ENCODE measurements at regions of chr10 and their contacts with region 1.

Region 1: DNA sequence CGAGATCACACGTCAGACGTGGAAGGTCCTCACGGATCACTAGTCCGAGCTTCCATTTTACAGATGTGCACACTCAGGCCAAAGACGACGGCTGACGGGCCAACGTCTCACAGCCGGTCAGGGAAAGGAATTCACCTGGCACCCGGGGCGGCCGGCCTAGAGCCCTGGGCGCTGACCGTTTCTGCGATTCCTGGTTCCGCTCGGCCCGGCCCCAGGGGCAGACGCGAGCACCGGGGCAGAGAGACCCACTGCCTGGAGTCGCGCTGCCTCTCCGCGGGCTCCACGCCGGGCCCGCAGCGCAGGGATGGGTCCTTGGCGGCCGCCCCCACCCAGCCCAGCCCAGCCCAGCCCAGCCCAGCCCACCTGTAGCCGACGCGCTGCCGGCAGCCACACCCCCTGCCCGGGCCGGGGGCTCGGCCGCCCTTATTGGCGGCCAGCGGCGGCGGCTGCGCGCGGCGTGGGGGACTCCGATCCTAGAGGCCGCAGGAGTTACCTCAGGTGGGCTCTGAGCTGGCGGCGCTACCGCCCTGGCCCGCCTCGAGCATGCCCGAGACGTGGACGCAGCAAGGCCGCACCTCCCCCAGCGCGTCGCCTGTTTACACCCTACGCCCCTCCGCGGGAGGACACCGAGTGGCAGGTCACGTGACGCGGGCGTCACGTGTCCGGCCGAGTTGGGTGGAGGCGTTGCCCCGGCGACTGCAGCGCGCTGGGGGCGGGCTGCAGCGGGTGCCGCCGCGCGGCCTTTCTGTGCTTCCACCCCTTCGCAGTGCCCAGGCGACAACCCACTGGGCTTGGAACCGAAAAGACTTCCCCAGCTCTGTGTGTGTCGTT is 78.1 kb downstream of the ZFAND4 start:
- DNase-seq: peak; percentile 97
- ATAC-seq: peak; percentile 99

Region 2: DNA sequence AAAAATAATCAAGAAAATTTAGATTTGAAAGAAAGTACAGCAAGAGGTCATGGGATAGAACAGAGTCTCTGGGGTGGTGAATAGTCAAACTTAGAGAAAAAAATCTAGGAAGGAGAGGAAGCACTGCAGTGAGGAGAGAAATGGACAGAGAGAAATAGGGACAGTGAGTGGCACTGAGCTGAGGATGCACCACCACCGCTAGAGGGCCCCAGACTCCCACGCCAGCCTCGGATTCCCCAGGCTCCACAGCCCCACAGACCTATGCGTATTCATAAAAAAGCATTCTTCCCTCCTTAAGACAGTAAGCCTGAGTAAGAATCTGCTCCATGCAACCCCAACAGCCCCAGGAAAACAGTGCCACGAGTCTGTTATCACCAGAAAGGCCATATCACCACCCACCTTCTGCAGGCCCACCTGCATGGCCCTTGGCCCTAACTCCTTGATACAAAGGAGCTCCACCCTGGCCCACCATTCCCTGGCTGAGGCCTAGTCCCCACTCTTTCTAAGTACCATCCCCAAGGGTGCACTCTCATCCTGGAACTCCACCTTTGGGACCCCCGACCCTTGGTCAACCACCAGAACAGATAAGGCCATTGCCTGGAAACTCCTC is 129.4 kb before region 1 on chr10:
- intact Hi-C with region 1: loop called (anchors 2 kb)
- DNase-seq: peak; percentile 88
- ATAC-seq: peak; percentile 90

Region 3: DNA sequence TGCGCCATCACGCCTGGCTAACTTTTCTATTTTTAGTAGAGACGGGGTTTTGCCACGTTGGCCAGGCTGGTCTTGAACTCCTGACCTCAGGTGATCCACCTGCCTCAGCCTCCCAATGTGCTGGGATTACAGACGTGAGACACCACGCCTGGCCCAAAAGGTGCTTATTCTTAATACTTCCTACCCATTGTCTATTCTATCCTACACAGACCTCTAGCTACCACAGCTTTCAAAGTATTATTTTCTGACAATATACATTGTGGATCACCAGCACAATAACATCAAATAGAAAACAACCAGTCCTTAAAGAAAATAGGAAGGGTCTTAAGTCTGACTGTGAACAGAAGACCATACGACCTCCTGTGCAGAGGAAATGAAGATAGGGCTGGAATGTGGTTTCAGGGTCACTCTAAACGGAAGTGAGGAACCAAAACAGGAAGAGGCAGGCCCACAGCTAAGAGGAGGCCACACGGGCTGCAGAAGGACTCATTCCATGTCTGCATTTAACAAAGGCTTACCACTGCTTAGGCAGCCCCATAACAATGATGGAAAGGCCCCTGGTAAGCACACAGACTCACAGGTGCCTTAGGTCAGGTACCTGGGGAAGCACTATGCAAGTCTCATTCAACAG is 37.1 kb before region 1 on chr10:
- intact Hi-C with region 1: no loop called
- DNase-seq: no peak
- ATAC-seq: peak; percentile 44

Region 4: GRCh38 chr10:45627412-45628048 is 33.0 kb after region 1 on chr10:
- intact Hi-C with region 1: loop called (anchors 2 kb)
- DNase-seq: no peak
- ATAC-seq: peak; percentile 89

Region 5: DNA sequence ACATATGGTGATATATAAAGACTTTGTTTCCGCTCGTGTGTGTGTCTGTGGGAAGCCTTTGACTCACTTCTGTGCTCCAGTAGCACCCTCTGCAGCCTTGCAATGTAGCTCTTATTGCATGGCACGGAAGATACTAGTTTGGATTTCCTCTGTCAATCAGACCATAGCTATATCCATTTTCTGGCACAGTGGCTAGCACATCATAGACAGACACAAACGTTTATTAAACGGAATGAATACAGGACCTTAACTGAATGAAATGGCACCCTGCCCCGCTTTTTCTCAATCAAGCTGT is 1192.8 kb after region 1 on chr10:
- intact Hi-C with region 1: no loop called
- DNase-seq: no peak
- ATAC-seq: peak; percentile 54

Measured in Right ventricle myocardium inferior (tissue), 1 donor.